HepG2 (cell line): ENCODE measurements at regions of chr12 and their contacts with region 1.

Region 1: DNA sequence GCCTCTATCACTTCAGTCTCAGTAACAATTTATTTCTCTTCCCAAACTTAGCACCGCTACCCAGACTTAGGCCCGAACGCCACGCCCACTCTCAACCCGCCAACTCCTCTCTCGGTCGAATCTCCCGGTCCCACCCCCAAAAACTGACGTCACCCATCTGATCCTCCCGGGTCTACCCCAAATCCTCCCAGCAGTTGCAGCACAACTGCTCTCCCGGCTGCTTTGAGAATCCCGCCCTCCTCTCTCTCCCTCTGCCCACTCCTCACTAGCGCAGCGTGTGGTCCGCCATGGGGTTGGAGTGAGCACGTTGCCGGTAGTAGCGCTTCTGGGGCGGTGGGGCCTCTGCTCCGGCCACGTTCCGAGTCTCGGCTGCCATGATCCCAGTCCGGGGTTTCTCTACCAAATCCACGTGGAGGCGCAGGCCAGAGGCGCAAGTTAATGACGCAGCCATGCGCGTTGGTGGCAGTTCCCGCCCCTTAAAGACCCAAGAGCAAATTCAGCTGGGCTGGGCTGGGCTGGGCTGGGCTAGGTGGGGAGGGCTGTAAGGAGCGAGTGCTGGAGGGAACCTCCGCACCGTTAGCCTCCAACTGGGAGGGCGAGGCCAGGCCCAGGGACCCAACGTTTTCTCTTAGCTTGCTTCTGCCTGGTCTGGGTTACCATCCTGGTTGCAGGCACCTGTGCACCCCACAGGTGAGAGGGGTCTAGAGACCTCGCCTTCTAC is at the start of gene METTL1:
- DNase-seq: peak; percentile 95
- ATAC-seq: peak; percentile 91
- H3K4me3 ChIP-seq: peak within 1 kb of the TSS; percentile 77 to 89 (median 78)
- H3K27ac ChIP-seq: peak within 1 kb of the TSS; percentile 97
- H3K4me1 ChIP-seq: peaks cover 23% of the 10 kb centered on the region
- H3K27me3 ChIP-seq: no peaks in the 10 kb centered on the region; a peak in 1 of 5 replicates
- CTCF ChIP-seq: peak; percentile 39; the same call in 1 of the 2 replicates
- EP300 ChIP-seq: peak; percentile 36 to 45; a peak in 2 of 4 replicates
- POLR2A ChIP-seq: peak; percentile 89 to 92
- RAD21 ChIP-seq: no peak
- total RNA-seq, gene METTL1: 34.7 and 35.5 TPM in 2 replicates

Region 2: DNA sequence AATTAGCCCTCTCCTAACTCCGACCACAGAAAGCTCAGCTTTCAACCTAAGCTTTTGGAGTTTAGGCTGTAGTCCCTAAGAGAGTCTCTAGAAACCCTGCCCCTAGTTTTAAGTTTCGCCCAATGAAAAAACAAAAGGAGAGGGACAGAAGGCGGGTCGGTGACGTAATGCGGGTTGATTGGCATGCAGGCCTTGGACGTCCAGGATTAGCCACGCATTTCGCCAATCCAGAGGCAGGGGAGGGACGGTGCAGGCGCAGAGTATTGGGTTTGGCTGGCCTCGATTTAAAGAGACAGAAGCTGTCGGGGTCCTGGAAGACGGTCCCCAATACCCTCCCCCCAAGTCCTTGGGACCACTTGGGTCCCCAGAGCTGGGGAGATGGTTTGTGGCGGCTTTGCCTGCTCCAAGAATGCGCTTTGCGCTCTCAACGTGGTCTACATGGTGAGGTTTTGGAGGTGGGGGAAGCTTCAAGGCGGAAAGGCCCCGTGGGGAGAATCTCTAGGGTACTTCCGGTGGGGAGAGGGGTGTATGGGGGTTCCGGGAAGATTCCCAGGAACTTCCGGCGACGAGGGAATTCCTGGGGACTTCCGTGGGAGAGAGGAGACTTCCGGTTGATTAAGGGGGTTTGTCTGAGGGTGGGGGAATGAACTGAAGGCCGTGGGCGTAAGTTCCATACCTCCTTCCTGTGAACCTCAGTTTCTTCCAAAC is 26.9 kb before region 1 on chr12 and contains the start of gene TSPAN31:
- CTCF ChIA-PET with region 1: no interaction called
- POLR2A ChIA-PET with region 1: interaction called, 13 read pairs
- in situ Hi-C with region 1: no loop called
- intact Hi-C with region 1: no loop called
- DNase-seq: peak; percentile 97
- ATAC-seq: peak; percentile 90
- H3K4me3 ChIP-seq: peak within 1 kb of the TSS; percentile 63 to 80 (median 71)
- H3K27ac ChIP-seq: peak within 1 kb of the TSS; percentile 94
- H3K4me1 ChIP-seq: peaks cover 37% of the 10 kb centered on the region
- H3K27me3 ChIP-seq: peaks cover 0 to 10% of the 10 kb centered on the region in 2 experiments; a peak in 3 of 5 replicates
- CTCF ChIP-seq: no peak
- EP300 ChIP-seq: no peak
- POLR2A ChIP-seq: peak; percentile 57 to 66
- RAD21 ChIP-seq: no peak
- total RNA-seq, gene TSPAN31: 5.4 and 10.4 TPM in 2 replicates

Region 3: DNA sequence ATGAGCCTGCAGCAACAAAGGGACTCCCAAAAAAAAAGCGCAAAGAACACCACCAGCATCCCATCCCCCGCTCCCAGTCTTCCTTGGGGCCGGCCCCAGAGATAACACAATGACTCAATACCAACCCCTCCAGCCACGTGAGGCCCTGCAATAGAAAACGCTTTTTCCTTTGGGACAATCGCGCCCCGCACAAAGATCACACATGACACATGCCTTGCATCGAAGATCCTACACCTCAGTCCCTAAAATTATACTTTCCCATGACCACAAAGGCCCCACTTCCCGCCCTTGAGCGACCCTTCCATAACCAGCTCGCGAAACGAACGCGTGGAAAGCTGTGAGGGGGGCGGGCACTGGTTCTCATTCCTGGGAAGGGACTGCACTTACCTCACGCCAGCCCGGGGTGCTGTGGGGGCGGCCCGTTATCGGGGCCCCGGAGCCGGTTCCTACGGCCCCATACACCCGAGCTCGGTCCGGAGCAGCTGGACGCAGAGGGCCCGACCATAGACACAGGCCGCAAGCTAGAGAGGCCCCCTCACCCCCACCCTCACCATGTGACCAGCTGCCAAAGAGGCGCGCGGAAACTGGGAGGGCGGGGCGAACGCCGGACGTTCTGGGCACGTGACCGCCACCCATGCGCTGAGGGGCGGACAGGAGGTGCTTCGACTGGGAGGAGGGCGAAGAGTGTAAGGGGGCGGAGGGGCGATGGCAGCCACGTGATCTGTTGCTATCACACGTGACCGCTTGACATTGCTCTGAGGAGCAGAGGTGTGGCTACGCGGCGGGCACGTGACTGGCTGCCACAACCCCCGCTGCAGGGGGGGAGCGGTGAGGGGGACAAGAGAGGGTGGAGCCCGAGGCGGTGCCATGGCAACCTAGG is 19.8 kb before region 1 on chr12 and contains the start of gene CDK4:
- CTCF ChIA-PET with region 1: no interaction called
- POLR2A ChIA-PET with region 1: interaction called, 14 read pairs
- in situ Hi-C with region 1: no loop called
- intact Hi-C with region 1: no loop called
- DNase-seq: peak; percentile 99
- ATAC-seq: peak; percentile 77
- H3K4me3 ChIP-seq: peak within 1 kb of the TSS; percentile 72 to 87 (median 78)
- H3K27ac ChIP-seq: peak within 1 kb of the TSS; percentile 87
- H3K4me1 ChIP-seq: peaks cover 43% of the 10 kb centered on the region
- H3K27me3 ChIP-seq: no peaks in the 10 kb centered on the region; a peak in 1 of 5 replicates
- CTCF ChIP-seq: peak; percentile 32; the same call in 1 of the 2 replicates
- EP300 ChIP-seq: peak; percentile 33 to 73; a peak in 3 of 4 replicates
- POLR2A ChIP-seq: peak; percentile 75 to 80
- RAD21 ChIP-seq: peak; percentile 34; the same call in 1 of the 2 replicates
- total RNA-seq, gene CDK4: 209 and 255 TPM in 2 replicates

Region 4: DNA sequence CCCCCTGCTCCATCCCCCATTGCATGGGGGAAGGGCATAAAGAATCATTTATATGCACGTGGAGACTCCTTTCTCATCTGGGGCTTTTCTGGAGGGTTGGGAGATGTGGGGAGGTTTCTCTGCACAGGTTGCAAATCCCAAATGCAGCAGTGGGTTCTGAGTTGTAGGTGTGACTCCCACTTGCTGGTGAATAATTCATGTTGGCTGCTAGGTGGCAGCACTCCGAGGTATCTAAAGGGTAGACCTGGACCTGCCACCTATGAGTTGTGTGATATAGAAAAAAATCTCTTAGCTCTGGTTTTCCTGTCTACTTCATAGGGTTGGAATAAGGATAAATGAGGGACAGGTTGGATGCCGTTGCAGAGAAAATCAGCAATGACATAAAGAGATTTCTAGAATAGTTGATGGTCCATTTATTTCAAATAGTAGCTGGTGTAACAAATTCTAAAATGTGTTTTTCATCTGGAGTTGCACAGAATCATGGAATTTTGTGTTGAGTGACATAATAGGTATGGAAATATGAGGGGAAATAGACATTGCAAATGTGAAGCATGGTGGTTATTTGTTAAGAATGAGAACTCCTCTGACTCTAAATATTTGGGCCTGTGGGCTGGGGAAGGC is 12.4 kb before region 1 on chr12:
- CTCF ChIA-PET with region 1: no interaction called
- POLR2A ChIA-PET with region 1: interaction called, 14 read pairs
- in situ Hi-C with region 1: no loop called
- intact Hi-C with region 1: no loop called
- DNase-seq: peak; percentile 53
- ATAC-seq: peak; percentile 47
- H3K4me3 ChIP-seq: no peak overlapping the region
- H3K27ac ChIP-seq: no peak overlapping the region
- H3K4me1 ChIP-seq: peaks cover 24% of the 10 kb centered on the region
- H3K27me3 ChIP-seq: no peaks in the 10 kb centered on the region
- CTCF ChIP-seq: peak; percentile 60
- EP300 ChIP-seq: no peak
- POLR2A ChIP-seq: no peak
- RAD21 ChIP-seq: no peak

Region 5: DNA sequence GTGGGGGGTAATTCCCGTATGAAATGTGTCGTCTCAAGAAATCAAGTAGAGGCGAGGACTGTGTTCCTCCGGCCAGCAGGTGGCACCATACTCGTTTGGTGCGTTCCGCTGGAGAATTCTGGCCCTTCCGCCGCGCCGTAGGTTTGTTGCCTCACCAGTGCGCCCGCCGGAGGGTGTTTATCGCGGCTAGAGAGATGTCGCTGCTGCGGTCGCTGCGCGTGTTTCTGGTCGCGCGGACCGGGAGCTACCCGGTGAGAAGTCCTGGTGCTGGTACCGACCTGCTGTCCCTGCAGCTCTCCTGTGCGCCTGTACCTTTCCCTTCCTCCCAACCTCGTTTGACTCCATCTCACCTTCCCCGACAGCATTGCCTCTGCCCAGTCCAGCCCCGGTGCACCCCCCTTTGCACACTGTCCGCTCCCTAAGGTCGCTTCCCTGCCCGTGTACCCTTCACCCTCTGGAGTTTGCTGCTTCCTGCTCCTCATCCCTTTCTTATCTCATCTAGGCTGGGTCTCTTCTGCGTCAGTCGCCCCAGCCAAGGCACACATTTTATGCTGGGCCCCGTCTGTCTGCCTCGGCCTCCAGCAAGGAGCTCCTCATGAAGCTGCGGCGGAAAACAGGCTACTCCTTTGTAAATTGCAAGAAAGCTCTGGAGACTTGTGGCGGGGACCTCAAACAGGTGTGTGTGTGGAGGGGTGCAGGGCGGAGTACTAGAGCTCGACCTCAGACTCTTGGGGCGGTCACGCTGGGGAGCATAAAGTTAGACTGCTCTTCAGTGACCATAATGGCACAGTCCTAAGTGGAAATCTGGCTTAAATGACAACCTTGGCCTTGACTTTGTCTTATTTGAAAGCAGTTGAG is 11.0 kb after region 1 on chr12 and contains the start of gene TSFM:
- CTCF ChIA-PET with region 1: no interaction called
- POLR2A ChIA-PET with region 1: interaction called, 15 read pairs
- in situ Hi-C with region 1: no loop called
- intact Hi-C with region 1: loop called (anchors 1 kb)
- DNase-seq: peak; percentile 85
- ATAC-seq: peak; percentile 89
- H3K4me3 ChIP-seq: peak within 1 kb of the TSS; percentile 95 to 100 (median 99)
- H3K27ac ChIP-seq: peak within 1 kb of the TSS; percentile 55
- H3K4me1 ChIP-seq: peaks cover 17% of the 10 kb centered on the region
- H3K27me3 ChIP-seq: no peaks in the 10 kb centered on the region; a peak in 1 of 5 replicates
- CTCF ChIP-seq: peak; percentile 94
- EP300 ChIP-seq: peak in 1 of 2 experiments; percentile 21; a peak in 1 of 4 replicates
- POLR2A ChIP-seq: peak; percentile 89 to 94
- RAD21 ChIP-seq: peak; percentile 60
- total RNA-seq, gene TSFM: 68.3 and 89.7 TPM in 2 replicates

Region 6: GRCh38 chr12:57874166-57875108 is 102.6 kb after region 1 on chr12:
- CTCF ChIA-PET with region 1: no interaction called
- POLR2A ChIA-PET with region 1: no interaction called
- in situ Hi-C with region 1: no loop called
- intact Hi-C with region 1: no loop called
- DNase-seq: no peak
- ATAC-seq: no peak
- H3K4me3 ChIP-seq: no peak overlapping the region
- H3K27ac ChIP-seq: no peak overlapping the region
- H3K4me1 ChIP-seq: peaks cover 7% of the 10 kb centered on the region; the same call in 1 of the 2 replicates
- H3K27me3 ChIP-seq: peaks cover 2 to 11% of the 10 kb centered on the region in 2 experiments; a peak in 3 of 5 replicates
- CTCF ChIP-seq: no peak
- EP300 ChIP-seq: no peak
- POLR2A ChIP-seq: no peak
- RAD21 ChIP-seq: no peak